Right ventricle myocardium superior (tissue), 1 donor: ENCODE measurements at regions of chr12 and their contacts with region 1.

Region 1: GRCh38 chr12:20272801-20273200 is 95.5 kb upstream of the PDE3A start:
- DNase-seq: no peak
- ATAC-seq: peak; percentile 76

Region 2: GRCh38 chr12:20006871-20007730 is 265.7 kb before region 1 on chr12:
- intact Hi-C with region 1: loop called (anchors 10 kb)
- DNase-seq: no peak
- ATAC-seq: no peak